PC-3 (cell line): ENCODE measurements at regions of chr9 and their contacts with region 1.

Region 1: DNA sequence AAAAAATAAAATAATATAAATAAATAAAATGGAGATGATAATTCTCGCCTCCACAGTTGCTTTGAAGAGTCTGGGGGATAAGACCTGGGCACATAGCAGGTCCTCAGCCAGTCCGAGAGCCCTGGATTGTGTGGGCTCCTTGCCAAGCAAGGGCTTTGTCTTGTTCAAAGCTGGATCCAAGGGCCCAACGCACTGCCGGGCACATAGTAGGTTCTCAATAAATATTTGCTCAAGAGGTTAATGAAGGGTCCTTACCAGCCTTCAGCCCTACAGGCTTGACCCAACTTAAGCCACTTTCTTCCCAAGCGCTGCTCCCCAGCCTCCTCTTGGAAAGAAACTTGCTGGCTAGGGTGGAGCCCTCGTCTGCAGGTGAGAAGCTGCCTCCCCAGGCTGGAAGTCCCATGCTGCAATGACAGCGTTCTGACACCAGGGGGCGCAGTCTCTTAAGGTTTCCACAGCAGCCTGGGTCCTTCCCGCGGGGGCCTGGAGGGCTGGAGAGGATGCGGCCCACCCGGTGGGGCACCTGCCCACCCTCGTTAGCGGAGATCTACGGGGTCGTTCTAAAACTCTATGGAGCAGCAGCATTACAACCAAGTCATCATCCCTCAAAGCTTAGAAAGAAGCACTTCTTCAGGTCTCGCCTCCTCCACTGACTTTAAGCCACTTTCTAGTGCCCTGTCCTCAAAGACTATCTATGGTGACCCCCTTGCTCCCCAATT is 115.2 kb downstream of the LHX2 start:
- DNase-seq: peak; percentile 77
- ATAC-seq: 0 out of 2 replicates have a peak, but pooled peaks have one; percentile 37
- H3K4me3 ChIP-seq: no peak overlapping the region
- H3K27ac ChIP-seq: no peak overlapping the region
- H3K4me1 ChIP-seq: peaks cover 4% of the 10 kb centered on the region; the same call in 1 of the 2 replicates
- H3K27me3 ChIP-seq: no peaks in the 10 kb centered on the region
- CTCF ChIP-seq: peak; percentile 89

Region 2: DNA sequence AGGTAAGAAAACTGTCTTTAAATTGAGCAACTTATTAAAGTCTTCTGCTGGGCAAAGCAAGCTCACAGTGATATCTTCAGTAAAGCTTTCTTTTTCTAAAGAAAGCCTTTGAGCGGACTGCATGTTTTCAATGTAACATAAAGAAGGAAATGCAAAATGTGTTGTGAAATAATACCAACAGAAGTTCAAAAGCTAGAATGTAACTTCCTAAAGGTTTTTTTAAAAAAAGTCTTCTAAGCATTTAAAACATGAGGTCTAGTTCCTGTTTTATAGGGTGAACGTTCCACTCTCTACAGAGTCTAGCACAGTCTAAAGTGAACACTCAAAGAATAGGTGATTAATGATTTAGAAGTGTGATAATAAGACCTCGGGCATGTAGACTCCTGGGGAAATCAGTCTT is 259.7 kb before region 1 on chr9:
- CTCF ChIA-PET with region 1: no interaction called
- POLR2A ChIA-PET with region 1: no interaction called
- intact Hi-C with region 1: no loop called
- DNase-seq: no peak
- ATAC-seq: no peak
- H3K4me3 ChIP-seq: no peak overlapping the region
- H3K27ac ChIP-seq: no peak overlapping the region
- H3K4me1 ChIP-seq: no peaks in the 10 kb centered on the region
- H3K27me3 ChIP-seq: no peaks in the 10 kb centered on the region
- CTCF ChIP-seq: no peak

Region 3: DNA sequence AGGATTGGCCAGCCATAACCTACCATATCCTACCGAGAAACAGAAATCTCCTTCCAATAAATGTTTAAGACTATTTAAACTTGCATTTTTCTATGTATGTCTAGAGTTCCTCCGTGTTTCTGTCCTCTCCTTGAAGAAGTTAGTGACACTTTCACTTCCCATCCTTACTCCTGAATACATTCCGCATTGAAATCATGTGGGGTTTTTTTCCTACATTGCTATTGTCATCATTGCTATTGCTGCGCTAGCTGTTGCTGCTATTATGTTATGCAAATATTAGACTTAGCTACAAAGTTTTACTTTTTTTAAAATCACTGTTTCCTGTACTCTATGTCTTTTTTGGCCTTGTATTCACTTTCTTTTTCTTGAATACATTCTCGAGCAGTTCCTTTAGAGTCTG is 47.7 kb after region 1 on chr9:
- CTCF ChIA-PET with region 1: no interaction called
- POLR2A ChIA-PET with region 1: no interaction called
- intact Hi-C with region 1: no loop called
- DNase-seq: no peak
- ATAC-seq: no peak
- H3K4me3 ChIP-seq: no peak overlapping the region
- H3K27ac ChIP-seq: no peak overlapping the region
- H3K4me1 ChIP-seq: no peaks in the 10 kb centered on the region
- H3K27me3 ChIP-seq: peaks cover 33% of the 10 kb centered on the region
- CTCF ChIP-seq: no peak

Region 4: GRCh38 chr9:124248066-124248465 is 121.3 kb after region 1 on chr9:
- CTCF ChIA-PET with region 1: no interaction called
- POLR2A ChIA-PET with region 1: no interaction called
- intact Hi-C with region 1: no loop called
- DNase-seq: no peak
- ATAC-seq: no peak
- H3K4me3 ChIP-seq: no peak overlapping the region
- H3K27ac ChIP-seq: no peak overlapping the region
- H3K4me1 ChIP-seq: peaks cover 11% of the 10 kb centered on the region
- H3K27me3 ChIP-seq: no peaks in the 10 kb centered on the region
- CTCF ChIP-seq: no peak

Region 5: DNA sequence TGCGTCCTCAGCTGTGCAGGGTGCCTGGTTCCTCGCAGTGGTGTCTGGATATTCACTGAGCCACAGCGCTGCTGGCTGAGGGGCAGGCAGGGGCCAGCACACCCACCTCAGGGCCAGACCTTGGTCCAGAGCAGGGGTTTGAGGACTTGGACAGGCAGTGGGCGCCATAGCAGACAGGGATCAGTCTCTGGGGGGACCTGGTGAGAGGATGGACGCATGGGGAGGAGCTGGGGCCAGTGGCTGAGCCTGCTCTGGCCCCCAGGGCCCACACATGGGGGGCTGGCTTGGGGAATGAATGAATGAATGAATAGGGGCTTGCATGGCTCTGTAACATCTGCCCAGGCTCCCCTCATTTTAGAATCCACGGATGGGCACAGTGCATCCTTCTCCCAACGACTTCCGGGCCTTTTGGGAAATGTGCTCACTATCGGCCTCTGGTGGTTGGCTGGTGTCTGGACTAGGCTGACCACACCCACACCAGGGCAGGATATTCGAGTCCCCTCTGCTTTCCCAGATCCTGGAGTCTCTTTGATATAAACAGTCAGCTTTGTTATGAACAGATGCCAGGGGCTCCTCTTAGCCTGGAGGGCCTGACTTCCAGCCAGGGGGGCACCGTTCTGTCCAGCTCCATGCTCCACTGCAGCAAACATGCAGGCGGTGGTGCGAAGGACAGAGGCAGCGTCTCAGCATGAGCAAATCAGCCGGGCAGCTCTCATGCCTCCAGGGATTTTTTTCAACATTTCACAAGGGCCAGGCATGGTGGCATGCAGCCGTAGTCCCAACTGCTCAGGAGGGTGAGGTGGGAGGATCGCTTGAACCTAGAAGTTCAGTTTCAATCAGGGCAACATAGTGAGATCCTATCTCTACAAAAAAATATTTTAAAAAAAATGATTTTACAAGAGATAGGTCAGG is 193.6 kb after region 1 on chr9:
- CTCF ChIA-PET with region 1: no interaction called
- POLR2A ChIA-PET with region 1: no interaction called
- intact Hi-C with region 1: loop called (anchors 5 kb)
- DNase-seq: peak; percentile 68
- ATAC-seq: peak; percentile 96
- H3K4me3 ChIP-seq: no peak overlapping the region
- H3K27ac ChIP-seq: no peak overlapping the region
- H3K4me1 ChIP-seq: no peaks in the 10 kb centered on the region
- H3K27me3 ChIP-seq: no peaks in the 10 kb centered on the region
- CTCF ChIP-seq: peak; percentile 81

Region 6: DNA sequence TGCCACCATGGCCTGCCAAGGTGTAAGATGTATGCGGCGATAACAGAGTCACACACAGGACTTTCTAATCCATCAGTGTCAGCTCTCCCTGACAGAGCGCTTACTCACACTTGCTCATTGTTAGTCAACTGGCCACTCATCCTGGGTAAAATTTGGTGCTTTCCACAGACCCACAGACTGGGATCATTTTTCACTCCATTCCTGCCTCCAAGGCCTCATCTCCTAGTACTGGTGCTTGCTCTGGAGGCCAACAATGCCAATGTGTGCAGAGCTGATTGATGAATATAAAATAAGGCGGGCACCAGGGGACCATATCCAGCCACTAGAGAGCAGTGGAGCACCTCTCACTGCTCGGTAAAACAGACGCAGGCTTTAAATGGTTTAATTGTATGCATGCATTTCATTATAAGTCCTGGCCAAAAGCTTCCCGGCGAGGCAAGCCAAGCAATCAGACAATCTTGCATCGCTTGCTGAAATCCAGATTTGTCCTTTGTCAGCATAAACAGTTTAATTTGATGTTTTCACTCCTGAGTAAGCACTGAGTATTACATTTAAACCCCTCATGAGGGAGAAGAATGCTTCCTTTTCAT is 266.2 kb after region 1 on chr9:
- CTCF ChIA-PET with region 1: no interaction called
- POLR2A ChIA-PET with region 1: no interaction called
- intact Hi-C with region 1: loop called (anchors 10 kb)
- DNase-seq: peak; percentile 95
- ATAC-seq: peak; percentile 95
- H3K4me3 ChIP-seq: no peak overlapping the region
- H3K27ac ChIP-seq: peak overlapping the region; percentile 82
- H3K4me1 ChIP-seq: peaks cover 42% of the 10 kb centered on the region
- H3K27me3 ChIP-seq: no peaks in the 10 kb centered on the region
- CTCF ChIP-seq: peak; percentile 70